Esophagus muscularis mucosa (tissue), 4 donors: ENCODE measurements at regions of chr4 and their contacts with region 1.

Region 1: GRCh38 chr4:162497564-162498167 is 333.9 kb upstream of the FSTL5 start:
- DNase-seq: no peak
- H3K4me3 ChIP-seq: no peak overlapping the region
- H3K27ac ChIP-seq: no peak overlapping the region
- H3K4me1 ChIP-seq: no peaks in the 10 kb centered on the region
- H3K27me3 ChIP-seq: peaks cover 0 to 6% (median 0%) of the 10 kb centered on the region in 4 donors
- CTCF ChIP-seq: peak; percentile 72 to 81 (median 80)
- EP300 ChIP-seq: no peak
- POLR2A ChIP-seq: no peak

Region 2: DNA sequence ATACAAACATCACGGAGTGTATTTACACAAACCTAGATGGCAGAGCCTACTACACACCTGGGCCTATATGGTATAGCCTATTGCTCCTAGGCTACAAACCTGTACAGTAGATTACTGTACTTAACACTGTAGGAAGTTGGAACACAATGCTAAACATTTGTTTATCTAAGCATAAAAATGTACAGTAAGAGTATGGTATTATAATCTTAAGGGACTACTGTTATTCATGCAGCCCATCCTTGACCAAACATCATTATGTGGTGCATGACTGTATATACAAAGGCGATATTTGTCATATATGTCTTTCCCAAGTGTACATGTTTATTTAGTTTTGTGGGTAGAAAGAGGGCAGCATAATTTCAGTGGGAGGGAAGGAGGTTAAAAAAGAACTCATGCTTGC is 156.1 kb before region 1 on chr4:
- intact Hi-C with region 1: no loop called
- DNase-seq: no peak
- H3K4me3 ChIP-seq: no peak overlapping the region
- H3K27ac ChIP-seq: no peak overlapping the region
- H3K4me1 ChIP-seq: no peaks in the 10 kb centered on the region
- H3K27me3 ChIP-seq: no peaks in the 10 kb centered on the region
- CTCF ChIP-seq: no peak
- EP300 ChIP-seq: no peak
- POLR2A ChIP-seq: no peak

Region 3: GRCh38 chr4:163191999-163192398 is 694.3 kb after region 1 on chr4:
- intact Hi-C with region 1: loop called (anchors 10 kb)
- DNase-seq: no peak
- H3K4me3 ChIP-seq: no peak overlapping the region
- H3K27ac ChIP-seq: no peak overlapping the region
- H3K4me1 ChIP-seq: no peaks in the 10 kb centered on the region
- H3K27me3 ChIP-seq: no peaks in the 10 kb centered on the region
- CTCF ChIP-seq: peak; percentile 16 to 44 (median 37)
- EP300 ChIP-seq: no peak
- POLR2A ChIP-seq: no peak

Region 4: DNA sequence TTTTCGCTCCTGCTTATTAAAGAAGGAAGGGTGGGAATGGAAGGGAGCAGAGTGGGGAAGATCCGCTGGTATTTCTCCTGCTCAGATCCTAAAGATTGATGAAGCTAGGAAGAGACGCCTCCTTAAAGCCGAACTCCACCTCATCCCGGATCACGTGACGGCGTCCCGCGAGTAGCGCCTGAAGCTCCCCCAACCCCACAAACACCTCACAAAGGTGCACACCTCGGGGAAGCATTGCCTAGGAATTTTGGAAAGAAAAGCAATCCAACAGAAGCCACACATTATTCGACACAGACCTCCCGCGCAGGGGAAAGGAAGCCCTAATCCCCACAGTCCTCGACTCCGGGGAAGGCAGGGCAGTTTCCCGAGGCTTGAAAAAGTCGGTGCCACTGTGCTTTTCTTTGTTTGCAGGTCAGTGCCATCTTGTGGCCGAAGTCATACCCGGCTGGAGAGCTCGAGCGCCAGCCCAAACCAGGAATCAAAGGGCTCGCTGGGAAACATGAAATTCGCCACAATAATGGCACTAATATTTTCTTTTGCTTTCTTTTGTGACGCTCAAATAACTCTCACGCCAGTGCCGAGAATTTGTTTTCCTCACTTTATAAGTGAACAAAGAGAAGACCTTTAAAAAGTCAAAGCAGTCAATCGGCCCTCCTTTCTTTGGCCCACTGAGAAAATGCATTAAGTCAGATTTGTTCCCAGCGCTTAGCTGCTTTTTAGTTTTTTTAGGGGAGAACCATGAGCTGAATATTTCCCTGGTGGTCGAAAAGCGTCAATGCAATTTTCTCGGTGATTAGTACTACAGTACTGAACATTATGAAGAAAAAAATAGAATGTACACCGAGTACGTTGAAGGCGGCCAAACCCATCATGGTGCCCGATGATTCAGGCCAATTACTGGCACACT is 835.1 kb after region 1 on chr4 and contains the start of gene NPY1R:
- intact Hi-C with region 1: loop called (anchors 1 kb)
- DNase-seq: no peak
- H3K4me3 ChIP-seq: peak within 1 kb of the TSS; percentile 54 to 61 (median 58)
- H3K27ac ChIP-seq: peak within 1 kb of the TSS in 1 of 4 donors; percentile 32
- H3K4me1 ChIP-seq: peaks cover 6 to 21% (median 18%) of the 10 kb centered on the region in 4 donors
- H3K27me3 ChIP-seq: peaks cover 0 to 43% (median 5%) of the 10 kb centered on the region in 4 donors
- CTCF ChIP-seq: peak; percentile 42 to 68 (median 50)
- EP300 ChIP-seq: no peak
- POLR2A ChIP-seq: no peak
- total RNA-seq, gene NPY1R: 1.2 to 4.8 (median 2.3) TPM

Region 5: DNA sequence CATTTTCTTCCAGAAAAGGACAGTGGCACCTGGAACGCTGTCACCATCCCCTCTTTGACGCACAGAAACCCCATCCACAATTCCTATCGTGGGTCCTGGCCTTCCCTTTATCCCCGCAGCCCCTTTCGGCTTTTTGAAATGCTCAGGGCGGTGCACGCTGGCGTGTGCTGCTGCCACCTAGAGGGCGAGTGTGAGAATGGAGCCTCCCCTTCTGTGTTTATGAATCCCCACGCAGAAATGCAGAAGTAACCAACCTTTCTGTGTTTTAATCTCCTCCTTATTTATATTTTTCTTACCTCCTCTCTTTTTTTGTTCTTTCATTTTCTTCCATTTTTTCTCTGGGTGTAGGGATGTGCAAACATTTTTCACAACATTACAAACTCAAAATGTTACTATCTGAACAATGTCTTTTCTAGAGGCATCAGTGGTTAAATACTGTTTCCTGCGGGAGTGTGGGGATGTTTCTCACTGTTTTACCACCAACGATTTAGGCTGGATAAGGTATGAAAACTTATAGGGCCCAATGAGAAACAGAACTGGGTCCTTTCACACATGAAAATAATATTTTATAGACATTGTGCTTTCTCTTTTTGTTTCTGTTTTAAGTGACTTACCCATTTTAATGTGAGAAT is 1046.9 kb after region 1 on chr4:
- intact Hi-C with region 1: loop called (anchors 10 kb)
- DNase-seq: no peak
- H3K4me3 ChIP-seq: peak overlapping the region in 3 of 4 donors; percentile 26 to 48 (median 33)
- H3K27ac ChIP-seq: no peak overlapping the region
- H3K4me1 ChIP-seq: peaks cover 0 to 7% (median 3%) of the 10 kb centered on the region in 4 donors
- H3K27me3 ChIP-seq: no peaks in the 10 kb centered on the region
- CTCF ChIP-seq: peak; percentile 67 to 94 (median 81)
- EP300 ChIP-seq: no peak
- POLR2A ChIP-seq: no peak